Ovary (tissue), 10 donors: ENCODE measurements at regions of chr18 and their contacts with region 1.

Region 1: GRCh38 chr18:61738488-61738887 is 154.3 kb downstream of the RNF152 start:
- DNase-seq: no peak
- H3K4me3 ChIP-seq: no peak overlapping the region
- H3K27ac ChIP-seq: peak overlapping the region in 1 of 2 donors; percentile 29
- H3K4me1 ChIP-seq: peaks cover 6% of the 10 kb centered on the region
- H3K27me3 ChIP-seq: no peaks in the 10 kb centered on the region
- CTCF ChIP-seq: no peak
- EP300 ChIP-seq: no peak
- POLR2A ChIP-seq: no peak

Region 2: DNA sequence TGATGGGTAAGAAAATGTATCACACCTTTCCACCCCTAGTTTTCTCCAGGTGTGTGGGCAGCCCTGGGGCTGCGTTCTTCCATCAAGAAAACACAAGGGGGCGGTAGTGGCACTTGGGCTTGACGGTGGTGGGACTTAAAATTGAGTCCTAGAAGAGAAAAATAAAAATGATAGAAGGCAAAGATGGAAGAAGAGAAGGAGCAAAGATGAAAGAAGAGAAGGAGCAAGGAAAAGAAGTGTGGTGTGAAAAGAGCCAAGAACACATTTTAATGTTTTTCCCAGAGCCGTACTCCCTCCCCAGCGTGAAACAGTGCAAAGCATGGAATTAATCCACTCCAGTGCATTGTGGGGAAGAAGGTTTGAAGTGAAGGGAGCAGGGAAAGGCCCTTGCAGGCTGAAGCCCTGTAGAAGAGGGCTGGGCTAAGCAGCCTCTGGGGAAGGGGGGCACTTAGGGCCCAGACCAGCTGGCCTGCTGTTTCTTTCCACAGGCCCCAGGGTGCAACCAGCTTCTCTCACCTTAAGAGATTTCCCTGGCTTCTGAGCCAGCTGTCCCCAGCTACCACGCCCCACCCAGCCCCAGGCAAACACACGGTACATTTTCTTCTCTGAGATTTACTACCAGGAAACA is 102.5 kb before region 1 on chr18:
- intact Hi-C with region 1: loop called in 1 of 4 experiments (anchors 10 kb)
- DNase-seq: peak; percentile 17 to 53 (median 37)
- H3K4me3 ChIP-seq: no peak overlapping the region
- H3K27ac ChIP-seq: no peak overlapping the region
- H3K4me1 ChIP-seq: peaks cover 5% of the 10 kb centered on the region
- H3K27me3 ChIP-seq: no peaks in the 10 kb centered on the region
- CTCF ChIP-seq: peak; percentile 12 to 57 (median 36)
- EP300 ChIP-seq: no peak
- POLR2A ChIP-seq: no peak